Thyroid gland (tissue), 4 donors: ENCODE measurements at regions of chr7 and their contacts with region 1.

Region 1: DNA sequence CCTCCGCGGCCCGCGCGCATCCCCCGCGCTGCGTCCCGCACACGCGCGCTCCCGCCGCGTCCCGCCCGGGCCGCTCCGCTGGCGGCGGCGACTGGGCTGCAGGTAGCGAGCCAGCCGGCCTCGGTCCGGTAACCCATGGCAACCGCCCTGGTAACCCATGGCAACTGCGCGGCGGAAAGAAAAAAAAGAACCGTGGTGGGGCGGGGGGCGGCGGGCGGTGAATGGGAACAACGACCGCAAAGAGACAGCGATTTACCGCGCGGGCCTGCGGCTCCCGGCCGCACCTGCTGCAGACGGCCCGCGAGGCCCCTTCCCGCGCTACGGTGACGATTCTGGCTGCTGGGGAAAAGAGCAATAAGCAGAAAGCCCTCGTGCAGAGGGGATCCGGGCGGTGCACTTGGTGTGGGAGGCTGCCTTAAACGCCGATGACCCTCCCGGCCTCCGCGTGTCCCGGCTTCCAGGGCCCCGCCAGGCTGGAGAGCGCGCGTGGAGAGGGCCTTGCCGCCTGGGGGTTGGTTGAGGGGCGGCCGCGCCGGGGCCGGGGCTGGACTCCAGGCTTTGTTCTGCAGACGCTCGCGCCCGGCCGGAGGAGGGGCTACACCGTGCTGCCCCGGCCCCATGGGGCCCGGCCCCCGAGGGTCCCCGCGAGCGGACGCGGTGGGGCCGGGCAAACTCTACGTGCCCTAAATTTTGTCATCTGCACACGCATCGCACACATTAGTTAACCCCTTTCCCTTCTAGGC is 84.7 kb downstream of the SNX10 start:
- DNase-seq: peak in 1 of 2 donors; percentile 4
- H3K4me3 ChIP-seq: peak overlapping the region in 1 of 3 donors; percentile 9
- H3K27ac ChIP-seq: no peak overlapping the region
- H3K4me1 ChIP-seq: peaks cover 9 to 13% of the 10 kb centered on the region in 2 donors
- H3K27me3 ChIP-seq: peaks cover 31% of the 10 kb centered on the region
- CTCF ChIP-seq: no peak
- POLR2A ChIP-seq: no peak

Region 2: GRCh38 chr7:26667500-26668133 is 291.3 kb after region 1 on chr7:
- intact Hi-C with region 1: loop called (anchors 5 kb)
- DNase-seq: peak; percentile 69 to 76
- H3K4me3 ChIP-seq: no peak overlapping the region
- H3K27ac ChIP-seq: no peak overlapping the region
- H3K4me1 ChIP-seq: no peaks in the 10 kb centered on the region
- H3K27me3 ChIP-seq: no peaks in the 10 kb centered on the region
- CTCF ChIP-seq: peak; percentile 11 to 95 (median 74)
- POLR2A ChIP-seq: no peak